Right ventricle myocardium superior (tissue), 1 donor: ENCODE measurements at regions of chr17 and their contacts with region 1.

Region 1: DNA sequence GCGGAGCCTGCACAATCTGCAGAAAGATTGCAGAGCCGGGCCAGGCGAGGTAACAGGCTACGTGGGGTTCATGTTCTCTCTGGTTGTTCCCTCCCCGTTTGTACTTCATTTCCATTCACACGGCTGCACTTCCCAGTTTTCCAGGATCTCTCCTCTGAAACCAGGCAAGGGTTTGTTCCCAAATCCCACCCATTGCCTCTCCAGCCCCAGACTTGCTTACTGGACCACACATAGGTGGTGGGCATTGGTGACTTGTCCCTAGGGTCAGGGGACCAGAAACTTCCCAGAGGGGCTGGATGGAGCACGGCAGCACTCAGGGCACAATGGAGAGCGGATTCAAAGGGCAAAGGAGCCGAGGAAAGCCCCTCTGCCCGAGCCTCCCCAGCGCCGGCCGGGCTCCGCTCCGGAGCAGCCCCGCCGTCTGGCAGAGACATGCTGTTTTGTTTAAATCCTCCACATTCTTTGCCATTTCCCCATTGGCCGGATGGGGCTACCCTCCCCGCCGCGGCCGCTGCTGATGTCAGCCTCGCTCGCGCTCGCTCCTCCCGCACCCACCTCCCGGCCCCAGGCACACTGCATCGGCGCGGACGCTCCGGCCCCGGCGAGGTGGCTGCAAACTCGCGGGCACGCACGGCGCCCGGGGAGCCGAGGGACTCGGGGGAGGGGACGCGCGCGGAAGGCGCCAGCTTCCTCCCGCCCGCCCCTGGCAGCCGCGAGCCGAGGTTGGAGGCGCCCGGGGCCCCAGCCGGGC is at the start of gene PITPNC1:
- DNase-seq: peak; percentile 93
- ATAC-seq: peak; percentile 80
- total RNA-seq, gene PITPNC1: 14.6 TPM

Region 2: GRCh38 chr17:67475236-67475937 is 98.5 kb after region 1 on chr17:
- intact Hi-C with region 1: loop called (anchors 5 kb)
- DNase-seq: peak; percentile 88
- ATAC-seq: peak; percentile 87

Region 3: GRCh38 chr17:67546578-67547527 is 169.9 kb after region 1 on chr17:
- intact Hi-C with region 1: loop called (anchors 10 kb)
- DNase-seq: peak; percentile 72
- ATAC-seq: peak; percentile 74

Region 4: GRCh38 chr17:67629971-67630320 is 253.0 kb after region 1 on chr17:
- intact Hi-C with region 1: loop called (anchors 5 kb)
- DNase-seq: no peak
- ATAC-seq: peak; percentile 62

Region 5: GRCh38 chr17:67689534-67690177 is 312.7 kb after region 1 on chr17:
- intact Hi-C with region 1: loop called (anchors 2 kb)
- DNase-seq: no peak
- ATAC-seq: peak; percentile 70